Activated T-helper 1 cell treated with anti-CD3 and anti-CD28 coated beads, Interleukin-12 subunit alpha, Interleukin-12 subunit beta, Interleukin-2, Interleukin-4 antibody, amounts not matched to agents 30 ng/mL and 10 ng/mL and 1 ng/mL, durations not matched to agents 14 hours and 24 hours and 36 hours (primary cell): ENCODE measurements at regions of chr2 and their contacts with region 1.

Region 1: DNA sequence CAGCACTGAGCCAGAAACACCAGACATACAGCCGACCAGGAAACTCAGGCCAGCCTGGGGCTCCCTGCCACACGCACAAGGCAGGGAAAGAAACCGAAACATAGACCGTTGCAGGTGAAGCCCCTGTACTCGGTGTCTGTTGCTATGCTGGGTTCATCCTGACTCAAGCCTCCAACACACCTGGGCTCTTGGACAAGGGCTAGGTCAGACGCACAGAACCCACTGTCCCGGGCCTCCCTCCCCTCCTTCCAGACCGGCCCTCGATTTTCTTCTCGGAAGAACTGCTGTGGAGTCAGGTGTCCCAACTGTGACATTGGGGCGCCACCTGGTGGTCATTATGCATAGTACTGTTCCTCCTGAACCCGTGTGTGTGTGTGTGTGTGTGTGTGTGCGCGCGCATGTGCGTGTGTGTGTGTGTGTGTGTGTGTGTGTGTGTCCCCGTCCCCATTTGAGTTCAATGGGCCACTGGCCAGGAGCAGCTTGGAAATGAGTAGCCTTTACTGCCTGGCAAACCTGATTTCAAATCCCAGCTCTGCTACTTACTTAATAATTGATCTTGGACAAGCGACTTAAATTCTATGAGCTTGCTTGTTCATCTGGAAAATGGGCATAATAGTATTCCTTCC is 55.4 kb upstream of the GLI2 start:
- DNase-seq: peak; percentile 53
- H3K4me3 Mint-ChIP-seq: no peak overlapping the region
- H3K27ac Mint-ChIP-seq: no peak overlapping the region
- H3K4me1 Mint-ChIP-seq: no peaks in the 10 kb centered on the region
- H3K27me3 Mint-ChIP-seq: peaks cover 2% of the 10 kb centered on the region

Region 2: GRCh38 chr2:119517433-119517832 is 1162.8 kb before region 1 on chr2:
- intact Hi-C with region 1: loop called (anchors 2 kb)
- DNase-seq: no peak
- H3K4me3 Mint-ChIP-seq: no peak overlapping the region
- H3K27ac Mint-ChIP-seq: no peak overlapping the region
- H3K4me1 Mint-ChIP-seq: no peaks in the 10 kb centered on the region
- H3K27me3 Mint-ChIP-seq: peaks cover 13% of the 10 kb centered on the region

Region 3: DNA sequence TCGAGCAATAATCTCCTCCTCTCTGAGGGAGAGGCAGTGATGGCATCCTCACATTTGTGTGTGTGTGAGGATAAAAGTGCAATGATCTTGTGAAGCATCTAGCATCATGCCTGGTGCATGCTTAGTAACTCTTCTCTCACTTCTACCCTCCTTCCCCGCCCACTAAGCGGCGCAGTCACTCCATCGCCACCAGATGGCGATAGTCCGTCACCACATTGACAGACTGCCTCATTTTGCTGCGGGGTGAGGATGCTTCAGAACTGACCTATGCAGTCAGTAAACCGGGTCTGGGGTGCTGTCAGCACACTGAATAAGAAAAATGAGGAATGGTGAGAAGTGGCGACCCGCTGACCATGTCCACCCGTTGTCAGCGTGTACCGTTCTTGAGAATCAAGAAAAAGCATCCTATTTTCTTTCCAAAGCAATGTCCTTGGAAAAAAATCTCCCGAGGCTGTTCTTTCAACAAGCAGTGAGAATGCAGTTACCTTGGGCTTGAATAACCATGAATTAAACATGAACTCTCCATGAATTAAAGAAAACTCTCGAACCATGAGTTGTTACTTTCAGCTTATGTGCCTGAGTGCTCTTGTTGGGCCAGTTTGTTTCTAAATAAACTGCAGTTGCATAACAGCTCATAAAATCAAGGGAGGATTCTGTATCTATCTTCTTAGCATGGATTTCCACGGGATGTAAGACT is 1038.5 kb before region 1 on chr2:
- intact Hi-C with region 1: loop called (anchors 2 kb)
- DNase-seq: peak; percentile 60
- H3K4me3 Mint-ChIP-seq: no peak overlapping the region
- H3K27ac Mint-ChIP-seq: no peak overlapping the region
- H3K4me1 Mint-ChIP-seq: peaks cover 7% of the 10 kb centered on the region
- H3K27me3 Mint-ChIP-seq: peaks cover 6% of the 10 kb centered on the region

Region 4: GRCh38 chr2:119702918-119703401 is 977.3 kb before region 1 on chr2:
- intact Hi-C with region 1: loop called (anchors 1 kb)
- DNase-seq: peak; percentile 56
- H3K4me3 Mint-ChIP-seq: no peak overlapping the region
- H3K27ac Mint-ChIP-seq: no peak overlapping the region
- H3K4me1 Mint-ChIP-seq: peaks cover 3% of the 10 kb centered on the region
- H3K27me3 Mint-ChIP-seq: peaks cover 2% of the 10 kb centered on the region

Region 5: DNA sequence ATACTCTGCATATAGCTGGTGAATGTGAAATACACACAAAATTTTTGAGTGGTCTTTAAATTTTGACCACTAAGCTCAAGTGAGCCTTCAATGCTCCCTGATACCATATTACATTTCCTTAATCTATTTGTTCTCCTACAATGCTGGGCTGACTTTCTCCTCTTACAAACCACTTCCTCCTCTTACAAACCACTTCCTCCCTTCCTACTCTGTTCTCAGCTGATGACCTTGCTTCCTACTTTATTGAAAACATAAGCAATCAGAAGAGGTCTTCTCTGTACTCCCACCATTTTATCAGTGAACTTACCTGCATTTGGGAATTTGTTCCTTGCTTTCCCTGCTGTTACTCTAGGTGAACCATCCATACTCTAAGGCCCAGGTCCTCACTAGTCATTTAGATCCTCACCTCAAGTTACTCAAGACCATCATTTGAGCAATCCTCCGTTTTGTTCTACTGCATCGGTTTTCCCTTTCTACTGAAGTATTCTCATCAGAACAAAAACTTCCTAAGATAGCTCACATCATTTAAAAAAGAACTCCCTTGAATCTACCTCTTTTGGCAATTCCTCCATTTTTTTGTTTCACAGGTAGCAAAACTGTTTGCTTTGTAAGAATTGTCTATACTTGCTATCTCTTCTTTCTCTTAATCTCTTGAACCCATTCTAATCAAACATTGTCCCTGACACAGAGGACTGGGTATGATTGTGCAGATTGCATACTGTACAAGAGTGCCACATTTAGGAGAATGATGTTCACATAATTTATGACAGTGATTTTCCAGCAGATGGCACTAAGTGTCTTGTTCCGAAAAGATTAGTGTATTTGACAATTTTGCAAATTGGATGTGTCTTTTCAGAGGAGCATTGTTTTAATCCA is 570.8 kb before region 1 on chr2:
- intact Hi-C with region 1: loop called (anchors 1 kb)
- DNase-seq: peak; percentile 13
- H3K4me3 Mint-ChIP-seq: peak overlapping the region; percentile 29
- H3K27ac Mint-ChIP-seq: no peak overlapping the region
- H3K4me1 Mint-ChIP-seq: peaks cover 16% of the 10 kb centered on the region
- H3K27me3 Mint-ChIP-seq: peaks cover 14% of the 10 kb centered on the region

Region 6: GRCh38 chr2:120343433-120344105 is 336.7 kb before region 1 on chr2:
- intact Hi-C with region 1: loop called (anchors 1 kb)
- DNase-seq: peak; percentile 40
- H3K4me3 Mint-ChIP-seq: peak overlapping the region; percentile 33
- H3K27ac Mint-ChIP-seq: no peak overlapping the region
- H3K4me1 Mint-ChIP-seq: peaks cover 13% of the 10 kb centered on the region
- H3K27me3 Mint-ChIP-seq: peaks cover 61% of the 10 kb centered on the region

Region 7: DNA sequence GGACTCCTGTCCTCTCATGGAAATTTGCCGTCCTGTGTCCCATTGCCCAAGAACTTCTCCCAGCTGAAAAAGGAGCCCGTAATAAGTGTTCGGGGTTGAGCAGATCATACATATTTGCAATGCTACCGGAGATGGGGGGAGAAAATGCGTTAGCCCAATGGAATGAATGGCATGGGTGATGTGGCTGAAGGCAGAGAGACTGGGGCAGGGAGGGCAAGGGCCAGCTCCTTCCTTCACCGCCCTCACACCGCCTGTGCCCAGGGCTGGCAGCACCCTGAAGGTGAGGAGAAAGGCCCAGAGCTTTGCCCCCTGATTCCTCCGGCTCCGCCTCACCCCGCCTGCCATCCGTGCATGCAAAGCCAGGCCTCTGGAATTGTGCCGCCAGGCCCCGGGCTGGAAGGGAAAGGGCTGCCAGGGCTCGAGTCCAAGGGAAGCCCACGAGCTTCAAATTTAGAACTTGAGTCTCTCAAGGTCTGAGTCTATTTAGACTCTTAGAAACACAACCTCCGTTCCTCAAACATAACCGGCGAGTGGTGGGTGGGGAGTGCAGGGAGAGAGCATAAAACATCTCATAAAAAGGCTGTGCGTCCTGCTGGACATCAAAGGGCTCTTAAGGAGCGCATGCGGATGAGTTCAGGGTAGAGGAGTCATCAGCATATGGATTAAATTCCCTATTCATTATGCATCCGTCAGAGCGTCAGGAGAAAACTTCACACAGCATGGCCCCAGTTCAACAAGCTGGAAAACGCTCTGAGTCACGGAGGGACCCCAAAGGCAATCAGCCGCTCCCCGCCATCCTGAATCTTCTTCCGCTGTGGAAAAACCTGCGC is 66.3 kb before region 1 on chr2:
- intact Hi-C with region 1: no loop called
- DNase-seq: no peak
- H3K4me3 Mint-ChIP-seq: no peak overlapping the region
- H3K27ac Mint-ChIP-seq: no peak overlapping the region
- H3K4me1 Mint-ChIP-seq: no peaks in the 10 kb centered on the region
- H3K27me3 Mint-ChIP-seq: no peaks in the 10 kb centered on the region